ENCODE measurements at regions of chr2 and their contacts with region 1.

Region 1: GRCh38 chr2:162123806-162124758 is 28.0 kb downstream of the GCG start:
- DNase-seq: peak in 2 of 10 donors; percentile 59 to 60

Region 2: DNA sequence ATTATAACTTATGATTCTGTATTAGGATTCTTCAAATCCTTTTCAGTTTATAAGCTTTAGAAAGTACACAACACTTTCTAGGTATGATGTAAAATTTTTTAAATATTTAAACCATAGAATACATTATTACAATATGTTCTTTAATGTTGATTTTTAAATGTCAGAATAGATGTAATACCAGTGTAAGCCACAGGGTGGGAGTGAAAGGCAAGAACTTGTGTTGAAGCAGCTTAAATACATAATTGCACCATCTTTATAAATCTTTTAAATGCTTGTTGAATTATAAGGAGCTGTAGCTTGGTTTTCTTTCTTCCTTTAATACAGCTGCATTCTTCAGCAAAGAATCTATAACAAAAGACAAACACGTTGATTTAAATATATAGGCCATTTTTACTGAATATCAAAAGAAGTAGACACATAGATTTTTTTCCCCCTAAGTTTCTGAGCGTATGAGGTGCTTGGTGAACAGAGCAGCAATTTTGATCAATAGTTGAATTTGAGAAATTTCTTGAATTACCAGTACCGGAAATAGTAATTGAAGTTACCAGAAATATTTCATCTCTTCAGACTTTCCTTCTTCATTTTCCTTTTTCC is 900.8 kb before region 1 on chr2:
- intact Hi-C with region 1: loop called (anchors 10 kb)
- DNase-seq: no peak

Region 3: DNA sequence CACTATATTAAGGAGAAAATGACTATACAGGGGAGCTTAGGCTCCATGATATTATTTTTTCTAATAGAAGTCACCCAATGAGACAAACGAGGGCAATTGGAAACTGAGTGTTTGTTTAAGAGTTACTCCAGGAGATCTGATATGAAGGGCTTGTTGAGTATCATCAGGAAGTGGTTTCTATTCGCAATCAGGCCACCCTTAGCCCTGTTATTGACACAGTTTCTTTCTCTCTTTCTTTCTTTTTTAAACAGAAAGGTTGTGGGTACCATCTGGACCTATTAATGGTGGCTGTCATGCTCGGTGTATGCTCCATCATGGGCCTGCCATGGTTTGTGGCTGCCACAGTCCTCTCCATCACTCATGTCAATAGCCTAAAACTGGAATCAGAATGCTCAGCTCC is 167.3 kb before region 1 on chr2:
- intact Hi-C with region 1: no loop called
- DNase-seq: no peak

Region 4: DNA sequence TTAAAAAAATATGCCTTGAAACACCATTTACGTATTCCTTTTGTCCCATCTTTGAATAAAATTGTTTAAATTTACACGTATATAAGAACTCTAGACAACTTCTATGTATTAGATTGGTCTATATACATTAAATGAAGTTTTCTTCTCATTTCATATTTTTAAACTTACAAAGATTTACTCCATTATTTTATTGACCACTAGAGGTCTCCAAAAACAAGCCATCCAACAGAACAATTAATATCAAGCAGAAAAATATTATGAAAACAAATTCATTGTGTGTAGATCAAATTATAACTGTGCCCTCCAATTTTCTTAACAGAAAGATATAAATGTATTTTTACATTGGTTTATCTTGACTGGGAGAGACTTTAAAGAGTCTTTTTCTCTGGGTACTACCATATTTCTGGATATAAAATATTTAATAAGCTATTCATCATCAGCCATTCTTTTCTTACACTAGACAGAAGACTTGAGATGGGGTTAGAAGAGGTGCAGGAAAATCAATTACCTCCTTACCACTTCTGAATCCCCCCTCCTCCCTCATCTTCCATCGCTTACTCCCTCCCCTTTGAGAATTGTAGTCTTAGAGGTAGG is 116.5 kb before region 1 on chr2:
- intact Hi-C with region 1: loop called (anchors 5 kb)
- DNase-seq: no peak

Region 5: DNA sequence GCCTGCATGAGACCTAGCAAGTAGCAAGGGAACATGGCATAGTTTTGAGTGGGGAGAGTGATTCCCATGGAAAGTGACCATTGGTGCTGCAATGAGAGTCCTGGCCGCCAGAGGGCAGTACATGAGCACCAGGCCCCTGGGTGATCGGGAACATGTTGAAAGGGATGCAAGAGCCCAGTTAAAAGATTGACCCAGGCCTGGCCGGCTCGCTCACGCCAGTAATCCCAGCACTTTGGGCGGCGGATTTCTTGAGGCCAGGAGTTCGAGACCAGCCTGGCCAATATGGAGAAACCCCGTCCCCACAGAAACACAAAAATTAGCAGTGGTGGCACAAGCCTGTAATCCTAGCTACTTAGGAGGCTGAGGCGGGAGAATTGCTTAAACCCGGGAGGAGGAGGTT is 97.0 kb after region 1 on chr2:
- intact Hi-C with region 1: no loop called
- DNase-seq: peak in 9 of 10 donors; percentile 31 to 93 (median 73)

Measured in posterior cingulate gyrus (tissue), 11 donors.